ENCODE measurements at regions of chr14 and their contacts with region 1.

Region 1: GRCh38 chr14:52552063-52552988 is at the starts of genes GPR137C and TXNDC16:
- DNase-seq: peak; percentile 92 to 100 (median 98)
- ATAC-seq: peak; percentile 93
- H3K4me3 ChIP-seq: peak within 1 kb of the TSS; percentile 87
- H3K4me3 Mint-ChIP-seq: peak within 1 kb of the TSS; percentile 91 to 97 (median 96)
- H3K27ac ChIP-seq: peak within 1 kb of the TSS; percentile 90
- H3K27ac Mint-ChIP-seq: peak within 1 kb of the TSS; percentile 82 to 97 (median 94)
- H3K4me1 ChIP-seq: peaks cover 9 to 15% of the 10 kb centered on the region in 2 donors
- H3K4me1 Mint-ChIP-seq: peaks cover 6 to 40% (median 28%) of the 10 kb centered on the region in 7 donors
- H3K27me3 ChIP-seq: no peaks in the 10 kb centered on the region
- H3K27me3 Mint-ChIP-seq: peaks cover 0 to 26% (median 0%) of the 10 kb centered on the region in 5 donors
- total RNA-seq, gene GPR137C: 0.27 to 0.70 (median 0.34) TPM in 3 of 5 experiments, not detected in the others
- total RNA-seq, gene TXNDC16: 6.9 to 15.8 (median 9.1) TPM

Region 2: DNA sequence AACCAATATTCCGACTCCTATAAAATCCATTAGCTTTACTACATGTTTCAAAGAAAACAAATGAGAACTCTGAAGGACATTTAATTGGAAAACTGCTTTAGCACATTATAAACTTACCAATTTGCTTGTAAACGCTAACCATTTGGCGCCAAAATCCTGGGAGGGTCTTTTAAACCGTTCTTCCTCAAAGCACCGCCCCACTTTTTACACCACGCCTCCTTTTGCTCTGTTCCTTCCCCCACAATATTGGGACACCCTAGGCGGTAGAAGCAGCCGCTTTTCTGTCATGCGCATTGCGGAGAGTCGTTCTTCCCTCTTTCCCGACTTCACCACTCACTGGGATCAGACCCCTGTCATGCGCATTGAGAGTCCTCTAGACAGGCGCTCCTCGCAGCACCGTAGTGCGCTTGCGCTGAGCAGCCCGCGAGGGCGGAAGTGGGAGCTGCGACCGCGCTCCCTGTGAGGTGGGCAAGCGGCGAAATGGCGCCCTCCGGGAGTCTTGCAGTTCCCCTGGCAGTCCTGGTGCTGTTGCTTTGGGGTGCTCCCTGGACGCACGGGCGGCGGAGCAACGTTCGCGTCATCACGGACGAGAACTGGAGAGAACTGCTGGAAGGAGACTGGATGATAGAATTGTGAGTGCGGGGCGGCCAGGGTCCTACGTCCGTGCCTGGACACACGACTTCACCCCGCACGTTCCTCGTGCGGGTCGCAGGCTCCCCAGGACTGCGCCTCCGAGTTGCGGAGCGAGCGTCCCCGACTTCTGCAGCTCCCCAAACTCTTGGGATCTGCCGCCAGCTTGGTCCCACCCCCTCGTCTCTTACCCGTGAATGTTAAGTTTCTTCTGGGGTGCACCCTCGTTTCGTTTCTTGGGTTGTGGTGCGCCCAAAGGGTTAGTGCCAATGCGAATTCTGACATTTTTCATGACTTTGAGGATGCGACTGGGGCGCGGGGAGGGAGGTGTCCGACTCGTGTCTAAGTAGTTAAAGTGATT is 1312.2 kb before region 1 on chr14 and contains the start of gene TMX1:
- CTCF ChIA-PET with region 1: no interaction called
- POLR2A ChIA-PET with region 1: no interaction called
- intact Hi-C with region 1: loop called in 1 of 2 experiments (anchors 1 kb)
- DNase-seq: peak; percentile 70 to 88 (median 82)
- ATAC-seq: peak; percentile 94
- H3K4me3 ChIP-seq: peak within 1 kb of the TSS; percentile 99
- H3K4me3 Mint-ChIP-seq: no peak within 1 kb of the TSS
- H3K27ac ChIP-seq: peak within 1 kb of the TSS; percentile 81
- H3K27ac Mint-ChIP-seq: no peak within 1 kb of the TSS
- H3K4me1 ChIP-seq: peaks cover 16 to 17% of the 10 kb centered on the region in 2 donors
- H3K4me1 Mint-ChIP-seq: peaks cover 0 to 29% (median 20%) of the 10 kb centered on the region in 7 donors
- H3K27me3 ChIP-seq: no peaks in the 10 kb centered on the region
- H3K27me3 Mint-ChIP-seq: no peaks in the 10 kb centered on the region
- total RNA-seq, gene TMX1: 13.3 to 48.3 (median 23.1) TPM

Region 3: GRCh38 chr14:51860164-51860824 is 692.0 kb before region 1 on chr14 and contains the start of gene GNG2:
- CTCF ChIA-PET with region 1: no interaction called
- POLR2A ChIA-PET with region 1: interaction called, 3 read pairs
- intact Hi-C with region 1: loop called in 1 of 2 experiments (anchors 5 kb)
- DNase-seq: peak; percentile 62 to 87 (median 84)
- ATAC-seq: peak; percentile 98
- H3K4me3 ChIP-seq: peak within 1 kb of the TSS; percentile 65
- H3K4me3 Mint-ChIP-seq: peak within 1 kb of the TSS; percentile 89 to 99 (median 96)
- H3K27ac ChIP-seq: peak within 1 kb of the TSS; percentile 90
- H3K27ac Mint-ChIP-seq: peak within 1 kb of the TSS; percentile 88 to 99 (median 96)
- H3K4me1 ChIP-seq: peaks cover 28 to 45% of the 10 kb centered on the region in 2 donors
- H3K4me1 Mint-ChIP-seq: peaks cover 43 to 78% (median 65%) of the 10 kb centered on the region in 7 donors
- H3K27me3 ChIP-seq: no peaks in the 10 kb centered on the region
- H3K27me3 Mint-ChIP-seq: no peaks in the 10 kb centered on the region
- total RNA-seq, gene GNG2: 62.1 to 199 (median 106) TPM

Region 4: DNA sequence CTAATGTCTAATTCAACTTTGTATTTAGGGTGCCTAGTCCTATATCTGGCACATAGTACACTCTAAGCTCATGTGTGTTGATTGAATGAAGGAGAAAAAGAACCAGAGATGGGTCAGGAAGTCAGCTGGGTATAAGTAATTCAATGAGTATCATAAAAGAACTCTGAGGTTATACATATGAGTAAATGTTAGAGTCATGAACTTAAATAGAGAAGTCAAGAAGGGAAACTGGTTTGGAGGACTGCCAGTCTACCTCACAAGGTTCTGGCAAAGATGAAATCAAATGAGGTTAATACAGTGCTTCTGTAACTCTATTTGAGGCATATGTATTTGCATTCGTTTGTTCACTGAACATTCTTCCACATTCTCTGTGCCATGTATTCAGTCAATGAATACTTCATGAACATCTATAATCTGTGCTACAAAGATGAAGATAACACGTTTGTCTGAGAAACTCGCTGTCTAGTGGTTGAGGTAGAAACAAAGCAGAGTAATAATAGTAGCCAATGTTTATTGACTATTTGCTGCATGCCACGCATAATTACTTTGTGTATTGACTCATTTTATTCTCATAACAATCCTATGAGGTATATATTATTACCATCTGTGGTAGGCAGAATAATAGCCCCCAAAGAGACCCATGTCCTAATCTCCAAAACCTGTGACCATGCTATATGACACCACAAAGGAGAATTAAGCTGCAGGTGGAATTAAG is 149.4 kb before region 1 on chr14:
- CTCF ChIA-PET with region 1: no interaction called
- POLR2A ChIA-PET with region 1: no interaction called
- intact Hi-C with region 1: loop called in 1 of 2 experiments (anchors 5 kb)
- DNase-seq: peak in 6 of 9 donors; percentile 16 to 56 (median 36)
- ATAC-seq: peak; percentile 75
- H3K4me3 ChIP-seq: no peak overlapping the region
- H3K4me3 Mint-ChIP-seq: peak overlapping the region in 5 of 10 donors; percentile 1 to 25 (median 9)
- H3K27ac ChIP-seq: no peak overlapping the region
- H3K27ac Mint-ChIP-seq: peak overlapping the region in 5 of 9 donors; percentile 3 to 85 (median 15)
- H3K4me1 ChIP-seq: peaks cover 45 to 48% of the 10 kb centered on the region in 2 donors
- H3K4me1 Mint-ChIP-seq: peaks cover 31 to 72% (median 61%) of the 10 kb centered on the region in 7 donors
- H3K27me3 ChIP-seq: no peaks in the 10 kb centered on the region
- H3K27me3 Mint-ChIP-seq: peaks cover 0 to 6% (median 0%) of the 10 kb centered on the region in 5 donors

Region 5: GRCh38 chr14:52619692-52620091 is 67.4 kb after region 1 on chr14:
- CTCF ChIA-PET with region 1: no interaction called
- POLR2A ChIA-PET with region 1: no interaction called
- intact Hi-C with region 1: no loop called
- DNase-seq: no peak
- ATAC-seq: no peak
- H3K4me3 ChIP-seq: no peak overlapping the region
- H3K4me3 Mint-ChIP-seq: no peak overlapping the region
- H3K27ac ChIP-seq: no peak overlapping the region
- H3K27ac Mint-ChIP-seq: no peak overlapping the region
- H3K4me1 ChIP-seq: no peaks in the 10 kb centered on the region
- H3K4me1 Mint-ChIP-seq: peaks cover 0 to 2% (median 0%) of the 10 kb centered on the region in 7 donors
- H3K27me3 ChIP-seq: no peaks in the 10 kb centered on the region
- H3K27me3 Mint-ChIP-seq: peaks cover 0 to 32% (median 4%) of the 10 kb centered on the region in 5 donors

Region 6: DNA sequence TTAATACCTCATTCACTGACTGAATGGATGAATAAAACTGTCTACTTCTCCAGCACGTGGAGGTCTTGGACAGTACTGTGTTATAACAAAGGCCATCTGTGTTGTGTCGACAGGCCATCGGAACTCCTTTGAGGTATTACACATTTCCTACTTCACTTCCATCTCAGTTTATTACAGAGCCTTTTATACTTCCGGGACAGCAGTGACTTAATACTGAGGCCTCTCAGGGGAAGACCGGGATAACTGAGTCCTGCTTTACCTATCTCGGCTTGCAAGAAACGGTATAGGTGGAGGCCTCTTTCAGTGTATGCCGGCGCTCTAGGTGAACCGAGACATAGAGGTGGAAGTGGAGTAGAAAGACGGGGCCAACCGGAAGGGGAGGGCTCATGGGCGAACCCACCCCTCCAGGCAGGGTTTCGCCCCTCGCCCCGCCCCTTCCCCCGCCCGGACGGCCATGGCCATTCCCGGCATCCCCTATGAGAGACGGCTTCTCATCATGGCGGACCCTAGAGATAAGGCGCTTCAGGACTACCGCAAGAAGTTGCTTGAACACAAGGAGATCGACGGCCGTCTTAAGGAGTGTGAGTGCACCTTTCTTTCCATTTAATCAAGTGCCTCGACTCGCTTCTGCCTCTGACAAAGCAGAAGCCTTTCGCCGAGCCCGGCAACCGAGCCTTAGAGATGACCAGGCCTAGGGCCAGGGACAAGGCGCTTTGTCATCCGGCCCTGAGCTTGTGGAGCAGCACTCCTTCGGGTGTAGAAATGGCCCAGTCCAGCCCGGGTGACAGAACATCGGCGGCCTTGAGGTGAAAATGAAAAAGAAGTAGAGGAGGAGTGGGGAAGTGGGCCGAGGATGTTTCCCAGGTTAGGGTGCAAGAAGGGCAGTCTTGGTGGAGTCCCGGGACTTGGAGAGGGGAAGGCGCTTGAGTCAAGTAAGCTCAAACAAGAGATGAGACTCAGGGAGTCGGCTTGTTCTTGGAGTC is 154.7 kb after region 1 on chr14 and contains the start of gene PSMC6:
- CTCF ChIA-PET with region 1: no interaction called
- POLR2A ChIA-PET with region 1: no interaction called
- intact Hi-C with region 1: loop called (anchors 1 kb)
- DNase-seq: peak; percentile 82 to 93 (median 90)
- ATAC-seq: peak; percentile 99
- H3K4me3 ChIP-seq: peak within 1 kb of the TSS; percentile 74
- H3K4me3 Mint-ChIP-seq: peak within 1 kb of the TSS; percentile 96 to 100 (median 98)
- H3K27ac ChIP-seq: peak within 1 kb of the TSS; percentile 82
- H3K27ac Mint-ChIP-seq: peak within 1 kb of the TSS; percentile 95 to 98 (median 97)
- H3K4me1 ChIP-seq: peaks cover 11 to 16% of the 10 kb centered on the region in 2 donors
- H3K4me1 Mint-ChIP-seq: peaks cover 28 to 60% (median 52%) of the 10 kb centered on the region in 7 donors
- H3K27me3 ChIP-seq: no peaks in the 10 kb centered on the region
- H3K27me3 Mint-ChIP-seq: no peaks in the 10 kb centered on the region
- total RNA-seq, gene PSMC6: 84.8 to 131 (median 95.9) TPM

Region 7: GRCh38 chr14:52791203-52792096 is 239.1 kb after region 1 on chr14 and contains the start of gene GNPNAT1:
- CTCF ChIA-PET with region 1: no interaction called
- POLR2A ChIA-PET with region 1: interaction called, 3 read pairs
- intact Hi-C with region 1: loop called (anchors 1 kb)
- DNase-seq: peak; percentile 85 to 92 (median 89)
- ATAC-seq: peak; percentile 98
- H3K4me3 ChIP-seq: peak within 1 kb of the TSS; percentile 87
- H3K4me3 Mint-ChIP-seq: peak within 1 kb of the TSS; percentile 86 to 94 (median 93)
- H3K27ac ChIP-seq: peak within 1 kb of the TSS; percentile 74
- H3K27ac Mint-ChIP-seq: peak within 1 kb of the TSS; percentile 75 to 96 (median 89)
- H3K4me1 ChIP-seq: peaks cover 15 to 18% of the 10 kb centered on the region in 2 donors
- H3K4me1 Mint-ChIP-seq: peaks cover 23 to 48% (median 44%) of the 10 kb centered on the region in 7 donors
- H3K27me3 ChIP-seq: no peaks in the 10 kb centered on the region
- H3K27me3 Mint-ChIP-seq: no peaks in the 10 kb centered on the region
- total RNA-seq, gene GNPNAT1: 4.6 to 14.7 (median 8.5) TPM

Region 8: GRCh38 chr14:53152890-53153701 is 600.8 kb after region 1 on chr14 and contains the start of gene DDHD1:
- CTCF ChIA-PET with region 1: no interaction called
- POLR2A ChIA-PET with region 1: interaction called, 4 read pairs
- intact Hi-C with region 1: loop called (anchors 1 to 2 kb)
- DNase-seq: peak; percentile 76 to 88 (median 85)
- ATAC-seq: peak; percentile 95
- H3K4me3 ChIP-seq: peak within 1 kb of the TSS; percentile 86
- H3K4me3 Mint-ChIP-seq: peak within 1 kb of the TSS; percentile 95 to 100 (median 98)
- H3K27ac ChIP-seq: peak within 1 kb of the TSS; percentile 87
- H3K27ac Mint-ChIP-seq: peak within 1 kb of the TSS; percentile 94 to 99 (median 98)
- H3K4me1 ChIP-seq: peaks cover 32 to 34% of the 10 kb centered on the region in 2 donors
- H3K4me1 Mint-ChIP-seq: peaks cover 34 to 55% (median 51%) of the 10 kb centered on the region in 7 donors
- H3K27me3 ChIP-seq: no peaks in the 10 kb centered on the region
- H3K27me3 Mint-ChIP-seq: no peaks in the 10 kb centered on the region
- total RNA-seq, gene DDHD1: 46.7 to 103 (median 55.5) TPM